ENCODE measurements at regions of chr7 and their contacts with region 1.

Region 1: GRCh38 chr7:123580406-123581161 is 21.0 kb upstream of the ASB15 start:
- DNase-seq: peak; percentile 70
- ATAC-seq: peak; percentile 94
- H3K4me3 ChIP-seq: no peak overlapping the region
- H3K27ac ChIP-seq: no peak overlapping the region
- H3K4me1 ChIP-seq: no peaks in the 10 kb centered on the region
- H3K27me3 ChIP-seq: peaks cover 25% of the 10 kb centered on the region
- CTCF ChIP-seq: peak; percentile 87

Region 2: DNA sequence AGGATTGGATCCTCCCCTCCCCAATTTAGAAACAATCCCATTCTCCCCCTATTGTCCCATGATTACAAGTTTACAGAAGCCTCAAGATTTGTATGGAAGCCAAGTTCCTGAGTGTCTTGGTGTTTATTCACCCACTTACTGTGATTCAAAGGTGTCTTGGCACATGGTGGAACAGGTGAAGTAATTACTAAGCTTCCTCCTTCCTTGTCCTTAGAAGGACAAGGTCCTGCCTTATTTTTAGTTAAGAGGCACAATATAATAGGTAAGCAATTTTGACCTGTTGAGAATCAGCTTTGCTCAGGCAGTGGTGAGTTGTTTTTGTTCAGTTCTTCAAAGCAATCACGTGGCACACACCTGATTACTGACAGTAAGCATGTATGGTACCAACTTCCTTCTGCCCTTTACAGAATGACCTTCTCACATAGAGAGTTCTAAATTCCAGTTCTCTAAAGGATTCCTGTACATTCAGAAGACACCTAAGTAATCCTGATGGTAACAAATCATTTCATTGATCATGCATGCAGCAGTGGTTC is 320.1 kb before region 1 on chr7:
- CTCF ChIA-PET with region 1: no interaction called
- POLR2A ChIA-PET with region 1: no interaction called
- intact Hi-C with region 1: no loop called
- DNase-seq: no peak
- ATAC-seq: no peak
- H3K4me3 ChIP-seq: no peak overlapping the region
- H3K27ac ChIP-seq: no peak overlapping the region
- H3K4me1 ChIP-seq: no peaks in the 10 kb centered on the region
- H3K27me3 ChIP-seq: no peaks in the 10 kb centered on the region
- CTCF ChIP-seq: no peak

Region 3: DNA sequence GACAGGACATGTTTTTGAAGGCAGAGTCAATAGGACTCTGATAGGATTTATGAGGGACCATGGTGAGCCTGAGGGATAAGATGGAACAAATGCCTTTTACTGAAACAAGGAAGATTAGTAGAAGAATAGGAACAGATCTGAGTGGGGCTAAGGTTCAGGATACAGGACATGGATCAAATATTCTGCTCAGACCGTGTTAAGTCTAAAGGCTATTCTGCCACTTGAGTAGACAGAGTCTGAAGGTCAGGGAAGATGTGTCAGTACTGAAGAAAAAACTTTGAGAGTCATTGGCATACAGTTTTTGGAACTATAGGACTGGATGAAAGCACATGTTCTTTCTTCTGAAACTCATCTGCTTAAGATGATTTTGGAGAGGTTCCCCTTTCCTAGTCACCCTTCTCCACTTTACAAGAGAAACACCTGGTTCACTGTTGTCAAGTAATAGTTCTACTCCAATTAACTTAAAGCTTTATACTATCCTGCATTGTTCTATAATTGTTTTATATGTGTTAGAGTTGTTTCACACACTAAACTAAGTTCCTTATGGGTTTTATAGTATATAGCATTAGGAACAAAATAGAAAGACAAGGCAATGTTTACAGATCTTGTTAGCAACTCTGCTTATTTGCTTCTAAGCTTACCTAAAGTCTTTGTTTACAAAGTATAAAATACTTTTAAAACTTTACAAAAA is 124.8 kb after region 1 on chr7:
- CTCF ChIA-PET with region 1: interaction called, 5 read pairs
- POLR2A ChIA-PET with region 1: no interaction called
- intact Hi-C with region 1: loop called (anchors 1 kb)
- DNase-seq: no peak
- ATAC-seq: no peak
- H3K4me3 ChIP-seq: no peak overlapping the region
- H3K27ac ChIP-seq: no peak overlapping the region
- H3K4me1 ChIP-seq: no peaks in the 10 kb centered on the region
- H3K27me3 ChIP-seq: no peaks in the 10 kb centered on the region
- CTCF ChIP-seq: no peak

Region 4: DNA sequence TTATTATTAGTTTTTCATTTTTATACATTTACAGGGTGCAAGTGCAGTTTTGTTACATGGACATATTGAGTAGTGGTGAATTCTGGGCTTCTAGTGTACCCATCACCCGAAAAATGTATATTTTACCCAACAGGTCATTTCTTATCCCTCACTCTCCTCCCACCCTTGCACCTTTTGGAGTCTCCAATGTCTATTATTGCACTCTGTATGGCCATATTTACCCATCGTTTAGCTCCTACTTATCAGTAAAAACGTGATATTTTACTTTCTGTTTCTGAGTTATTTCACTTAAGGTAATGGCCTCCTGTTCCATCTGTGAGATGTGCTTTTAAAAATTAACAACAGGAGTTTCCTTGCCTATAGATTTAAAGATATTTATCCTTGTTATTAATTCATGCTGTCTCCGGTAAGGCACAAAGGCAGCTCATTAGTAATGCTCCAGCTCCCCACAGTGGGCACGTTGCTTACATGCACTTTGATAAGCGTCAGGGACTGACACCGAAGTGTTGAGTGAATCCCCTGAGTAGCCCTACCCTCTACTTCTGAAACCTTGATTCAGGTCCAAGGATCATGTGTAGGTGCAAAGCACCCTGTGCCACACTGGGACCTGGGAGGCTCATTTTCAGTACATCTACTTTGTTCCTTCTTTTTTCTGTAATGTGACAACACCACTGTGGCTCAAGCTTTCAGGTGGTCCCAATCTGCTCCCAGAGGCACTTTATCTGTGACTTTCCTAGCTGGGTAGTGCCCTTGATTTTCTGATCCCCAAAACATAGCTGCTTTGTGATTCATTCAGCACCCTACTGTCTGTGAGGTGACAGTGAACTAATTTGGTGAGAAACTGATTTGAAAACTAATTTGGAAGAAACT is 291.6 kb after region 1 on chr7:
- CTCF ChIA-PET with region 1: interaction called, 3 read pairs
- POLR2A ChIA-PET with region 1: no interaction called
- intact Hi-C with region 1: loop called (anchors 2 kb)
- DNase-seq: peak; percentile 76
- ATAC-seq: peak; percentile 98
- H3K4me3 ChIP-seq: no peak overlapping the region
- H3K27ac ChIP-seq: no peak overlapping the region
- H3K4me1 ChIP-seq: peaks cover 12% of the 10 kb centered on the region; the same call in 1 of the 2 replicates
- H3K27me3 ChIP-seq: no peaks in the 10 kb centered on the region
- CTCF ChIP-seq: peak; percentile 86

Measured in PC-3 (cell line).